Esophagus squamous epithelium (tissue), 5 donors: ENCODE measurements at regions of chr4 and their contacts with region 1.

Region 1: DNA sequence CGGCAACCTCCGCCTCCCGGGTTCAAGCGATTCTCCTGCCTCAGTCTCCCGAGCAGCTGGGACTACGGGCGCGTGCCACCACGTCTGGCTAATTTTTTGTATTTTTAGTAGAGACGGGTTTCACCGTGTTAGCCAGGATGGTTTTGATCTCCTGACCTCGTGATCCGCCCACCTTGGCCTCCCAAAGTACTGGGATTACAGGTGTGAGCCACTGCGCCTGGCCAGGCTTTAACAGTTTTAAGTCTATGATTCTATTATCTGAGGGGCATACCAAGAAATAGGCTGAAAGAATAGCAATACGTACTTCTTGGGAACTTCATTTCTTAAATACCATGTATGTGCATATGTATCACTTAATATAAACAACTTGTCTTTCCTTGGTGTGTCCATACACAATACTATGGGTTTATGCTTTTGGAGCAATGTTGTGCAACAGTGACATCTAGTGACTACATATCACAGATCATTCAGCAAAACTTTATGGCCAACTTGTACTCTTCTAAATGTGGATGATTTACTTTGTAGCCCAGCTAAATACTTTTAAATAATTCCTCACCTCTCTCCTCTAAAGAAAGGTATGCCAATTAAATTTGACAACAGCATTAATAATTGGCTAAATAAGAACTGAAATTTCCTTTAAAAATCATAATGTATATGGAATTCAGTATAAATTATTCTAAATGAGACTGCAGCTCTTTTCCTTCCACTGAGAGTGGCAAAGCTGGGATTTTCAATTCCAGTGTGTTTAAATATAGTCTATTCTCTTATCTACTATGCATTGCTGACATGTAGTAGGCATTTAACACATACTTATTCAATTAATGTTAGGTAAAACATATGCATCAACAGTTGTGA is 10.4 kb downstream of the SLC9B1 start:
- DNase-seq: no peak
- H3K4me3 ChIP-seq: no peak overlapping the region
- H3K27ac ChIP-seq: no peak overlapping the region
- H3K4me1 ChIP-seq: peaks cover 0 to 17% (median 10%) of the 10 kb centered on the region in 3 donors
- H3K27me3 ChIP-seq: no peaks in the 10 kb centered on the region
- CTCF ChIP-seq: peak; percentile 30 to 74 (median 58)
- POLR2A ChIP-seq: no peak

Region 2: GRCh38 chr4:102344954-102345794 is 663.9 kb before region 1 on chr4 and contains the start of gene SLC39A8:
- intact Hi-C with region 1: loop called (anchors 5 kb)
- DNase-seq: peak; percentile 46
- H3K4me3 ChIP-seq: peak within 1 kb of the TSS; percentile 55 to 86 (median 68)
- H3K27ac ChIP-seq: peak within 1 kb of the TSS; percentile 65 to 84 (median 76)
- H3K4me1 ChIP-seq: peaks cover 6 to 25% (median 8%) of the 10 kb centered on the region in 3 donors
- H3K27me3 ChIP-seq: no peaks in the 10 kb centered on the region
- CTCF ChIP-seq: peak; percentile 45 to 87 (median 74)
- POLR2A ChIP-seq: peak in 2 of 4 donors; percentile 38 to 55
- total RNA-seq, gene SLC39A8: 2.9 to 8.6 (median 6.3) TPM

Region 3: GRCh38 chr4:102449751-102450352 is 559.2 kb before region 1 on chr4:
- intact Hi-C with region 1: loop called (anchors 10 kb)
- DNase-seq: no peak
- H3K4me3 ChIP-seq: no peak overlapping the region
- H3K27ac ChIP-seq: no peak overlapping the region
- H3K4me1 ChIP-seq: no peaks in the 10 kb centered on the region
- H3K27me3 ChIP-seq: no peaks in the 10 kb centered on the region
- CTCF ChIP-seq: peak; percentile 21 to 71 (median 58)
- POLR2A ChIP-seq: no peak

Region 4: DNA sequence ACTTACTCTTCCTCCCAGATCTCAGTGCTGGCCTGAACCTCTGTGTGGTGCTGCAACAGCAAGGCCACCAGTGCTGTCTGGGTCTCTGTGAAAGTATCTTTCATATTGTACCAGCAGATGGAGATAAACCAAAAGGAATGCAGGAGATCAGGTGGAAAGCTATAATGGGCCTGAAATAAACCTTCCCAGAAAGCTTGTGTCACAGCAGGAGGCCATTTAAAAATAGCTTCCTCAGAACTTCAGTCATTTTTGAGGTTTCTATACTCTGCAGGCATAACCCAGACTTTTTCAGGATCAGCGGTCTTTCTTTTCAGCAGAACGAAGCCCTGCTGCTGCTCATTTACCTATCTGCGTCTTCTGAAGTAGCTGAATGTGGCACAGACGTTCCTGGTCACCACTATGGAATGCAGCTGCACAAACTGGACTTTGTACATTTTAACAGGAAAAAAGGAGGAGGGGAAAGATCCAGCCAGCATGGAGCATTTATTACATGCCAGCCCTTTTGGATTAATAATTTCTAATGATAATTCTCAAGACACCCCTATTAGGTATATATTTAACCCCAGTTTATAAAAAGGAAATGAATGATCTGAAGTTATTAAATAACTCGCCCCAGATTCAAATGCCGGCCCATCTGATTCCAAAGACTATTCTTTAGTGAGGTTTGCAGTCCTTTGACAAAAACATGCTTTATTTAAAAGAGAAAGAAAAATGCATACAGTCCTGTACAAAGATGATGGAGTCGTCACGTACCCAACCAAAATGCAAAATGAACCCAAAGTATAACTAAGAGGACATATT is 388.2 kb before region 1 on chr4:
- intact Hi-C with region 1: loop called (anchors 5 kb)
- DNase-seq: no peak
- H3K4me3 ChIP-seq: no peak overlapping the region
- H3K27ac ChIP-seq: no peak overlapping the region
- H3K4me1 ChIP-seq: peaks cover 0 to 7% (median 0%) of the 10 kb centered on the region in 3 donors
- H3K27me3 ChIP-seq: no peaks in the 10 kb centered on the region
- CTCF ChIP-seq: peak; percentile 19 to 72 (median 49)
- POLR2A ChIP-seq: no peak